Activated CD4-positive, alpha-beta T cell treated with anti-CD3 and anti-CD28 coated beads for 36 hours (primary cell): ENCODE measurements at regions of chr18 and their contacts with region 1.

Region 1: GRCh38 chr18:35240664-35241447 is at the start of gene ZNF397:
- DNase-seq: peak; percentile 98
- ATAC-seq: peak; percentile 98
- H3K4me3 Mint-ChIP-seq: peak within 1 kb of the TSS; percentile 97
- H3K27ac Mint-ChIP-seq: peak within 1 kb of the TSS; percentile 97
- H3K4me1 Mint-ChIP-seq: peaks cover 31% of the 10 kb centered on the region
- H3K27me3 Mint-ChIP-seq: no peaks in the 10 kb centered on the region
- total RNA-seq, gene ZNF397: 21.3 to 21.9 TPM

Region 2: DNA sequence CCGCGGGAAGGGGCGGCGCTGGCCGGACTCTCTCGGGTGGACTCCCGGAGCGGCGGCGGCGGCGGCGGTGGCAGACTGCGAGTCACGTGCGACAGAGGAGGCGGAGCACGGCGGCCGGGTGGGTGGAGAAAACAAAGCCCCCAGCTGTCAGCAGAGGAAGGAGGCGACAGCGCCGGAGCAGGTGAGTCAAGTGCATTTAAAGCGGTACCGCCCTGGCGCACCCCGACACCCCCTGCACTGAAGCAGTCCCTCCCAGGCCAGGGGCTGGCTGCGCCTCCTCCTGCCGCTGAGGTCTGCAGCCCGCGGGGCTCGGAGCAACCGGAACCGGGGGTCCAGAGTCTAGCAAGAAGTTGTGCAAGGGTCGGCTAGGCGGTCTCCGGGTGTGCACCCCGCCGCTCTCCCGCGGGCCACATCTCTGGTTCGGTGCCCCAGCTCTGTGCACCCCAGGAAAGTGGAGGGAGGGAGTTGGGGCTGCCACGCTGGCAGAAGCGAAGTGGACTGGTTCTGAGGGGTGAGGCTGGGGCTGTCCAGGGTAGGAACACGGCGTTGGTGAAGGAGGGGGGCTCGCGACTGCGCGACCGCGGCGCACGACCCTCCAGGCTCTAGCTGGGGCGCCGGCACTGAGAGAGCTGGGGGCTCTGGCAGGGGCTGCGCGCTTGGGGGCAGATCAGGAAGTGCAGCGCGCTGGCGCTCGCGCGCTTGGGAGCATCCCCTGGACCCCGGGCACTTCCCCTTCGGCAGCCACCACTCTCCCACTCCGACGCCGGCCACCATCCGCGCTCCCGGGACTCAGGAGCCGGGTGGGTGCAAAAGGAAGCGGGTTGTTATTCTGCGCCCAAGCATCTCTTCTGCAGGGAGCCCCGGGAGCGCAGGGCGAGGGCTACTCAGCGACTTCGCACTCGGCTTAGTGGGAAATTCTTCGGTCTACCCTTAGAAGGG is 263.7 kb before region 1 on chr18:
- CTCF ChIA-PET with region 1: no interaction called
- POLR2A ChIA-PET with region 1: no interaction called
- intact Hi-C with region 1: loop called in 1 of 2 experiments (anchors 1 kb)
- DNase-seq: peak; percentile 85
- ATAC-seq: peak; percentile 55
- H3K4me3 Mint-ChIP-seq: peak overlapping the region; percentile 73
- H3K27ac Mint-ChIP-seq: no peak overlapping the region
- H3K4me1 Mint-ChIP-seq: peaks cover 23% of the 10 kb centered on the region
- H3K27me3 Mint-ChIP-seq: peaks cover 32% of the 10 kb centered on the region

Region 3: DNA sequence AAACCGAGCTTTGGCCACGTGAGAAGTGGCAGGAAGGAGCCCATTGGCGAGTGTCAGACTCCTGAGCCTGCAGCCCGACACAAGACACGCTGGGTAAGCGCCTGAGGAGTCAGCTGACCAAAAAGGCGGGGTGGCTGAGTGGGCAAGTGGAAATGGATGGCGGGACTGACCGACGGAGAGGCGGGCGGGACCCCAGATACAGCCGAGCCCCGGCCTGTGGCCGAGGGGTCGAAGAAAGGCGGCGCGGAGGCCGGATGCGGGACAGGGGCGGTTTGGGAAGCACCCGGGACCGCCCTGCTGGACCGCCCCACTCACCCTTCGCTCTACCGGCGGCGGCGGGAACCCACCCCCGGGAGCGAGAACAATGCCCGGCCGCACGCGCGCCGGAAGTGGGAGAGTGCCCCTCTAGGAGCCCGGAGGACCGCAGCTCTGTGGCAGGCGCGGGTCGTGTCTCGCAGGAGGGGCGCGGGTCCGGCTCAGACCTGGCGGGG is 26.4 kb after region 1 on chr18:
- CTCF ChIA-PET with region 1: interaction called, 4 read pairs
- POLR2A ChIA-PET with region 1: interaction called, 5 read pairs
- intact Hi-C with region 1: loop called (anchors 1 to 2 kb)
- DNase-seq: peak; percentile 76
- ATAC-seq: peak; percentile 82
- H3K4me3 Mint-ChIP-seq: peak overlapping the region; percentile 80
- H3K27ac Mint-ChIP-seq: peak overlapping the region; percentile 91
- H3K4me1 Mint-ChIP-seq: peaks cover 21% of the 10 kb centered on the region
- H3K27me3 Mint-ChIP-seq: no peaks in the 10 kb centered on the region

Region 4: GRCh38 chr18:35343936-35344735 is 103.3 kb after region 1 on chr18 and contains the start of gene ZNF24:
- CTCF ChIA-PET with region 1: interaction called, 6 read pairs
- POLR2A ChIA-PET with region 1: interaction called, 4 read pairs
- intact Hi-C with region 1: loop called (anchors 1 to 2 kb)
- DNase-seq: peak; percentile 96
- ATAC-seq: peak; percentile 93
- H3K4me3 Mint-ChIP-seq: peak within 1 kb of the TSS; percentile 86
- H3K27ac Mint-ChIP-seq: peak within 1 kb of the TSS; percentile 94
- H3K4me1 Mint-ChIP-seq: peaks cover 38% of the 10 kb centered on the region
- H3K27me3 Mint-ChIP-seq: no peaks in the 10 kb centered on the region
- total RNA-seq, gene ZNF24: 31.7 to 50.9 TPM

Region 5: DNA sequence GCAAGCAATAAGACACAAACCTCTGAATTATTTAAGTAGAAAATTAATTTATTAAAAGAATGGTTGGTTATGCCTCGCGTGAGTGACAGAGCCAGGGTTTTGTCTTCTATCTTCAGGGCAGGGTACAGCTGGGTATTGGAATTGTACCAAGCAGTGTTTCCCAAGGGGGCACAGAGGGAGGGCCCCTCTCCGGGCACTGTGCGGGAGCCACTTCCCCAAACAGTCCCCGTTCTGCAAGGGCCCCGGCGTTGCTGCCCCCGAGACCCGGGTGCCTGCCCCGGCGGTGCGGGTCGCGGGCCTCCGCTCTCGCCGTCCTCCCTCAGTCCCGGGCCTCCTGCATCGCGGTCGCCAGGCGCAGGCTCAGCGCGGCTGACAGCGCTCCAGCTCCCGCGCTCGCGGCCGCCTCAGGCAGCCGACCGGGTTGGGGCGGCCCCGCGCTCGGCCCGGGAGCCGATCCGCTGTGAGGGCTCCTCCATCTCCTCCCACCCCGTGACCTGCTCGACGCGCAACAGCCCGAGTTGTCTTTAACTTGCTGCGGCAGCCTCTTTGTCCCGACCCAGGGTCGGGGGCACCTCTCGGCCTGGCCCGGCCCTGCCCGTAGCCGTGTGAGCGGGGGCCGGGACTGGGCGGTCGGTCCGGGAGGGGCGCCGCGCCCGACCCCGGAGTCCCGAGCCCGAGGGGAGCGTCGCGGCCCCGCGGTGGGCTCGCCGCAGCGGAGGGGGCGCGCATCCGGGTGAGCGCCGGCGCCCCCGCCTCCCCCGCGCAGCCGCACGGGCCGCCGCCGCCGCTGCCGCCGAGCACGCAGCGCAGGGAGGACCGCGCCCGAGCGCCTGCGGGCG is 340.1 kb after region 1 on chr18:
- CTCF ChIA-PET with region 1: no interaction called
- POLR2A ChIA-PET with region 1: no interaction called
- intact Hi-C with region 1: loop called in 1 of 2 experiments (anchors 2 kb)
- DNase-seq: peak; percentile 72
- ATAC-seq: peak; percentile 61
- H3K4me3 Mint-ChIP-seq: peak overlapping the region; percentile 69
- H3K27ac Mint-ChIP-seq: peak overlapping the region; percentile 37
- H3K4me1 Mint-ChIP-seq: peaks cover 35% of the 10 kb centered on the region
- H3K27me3 Mint-ChIP-seq: peaks cover 17% of the 10 kb centered on the region

Region 6: DNA sequence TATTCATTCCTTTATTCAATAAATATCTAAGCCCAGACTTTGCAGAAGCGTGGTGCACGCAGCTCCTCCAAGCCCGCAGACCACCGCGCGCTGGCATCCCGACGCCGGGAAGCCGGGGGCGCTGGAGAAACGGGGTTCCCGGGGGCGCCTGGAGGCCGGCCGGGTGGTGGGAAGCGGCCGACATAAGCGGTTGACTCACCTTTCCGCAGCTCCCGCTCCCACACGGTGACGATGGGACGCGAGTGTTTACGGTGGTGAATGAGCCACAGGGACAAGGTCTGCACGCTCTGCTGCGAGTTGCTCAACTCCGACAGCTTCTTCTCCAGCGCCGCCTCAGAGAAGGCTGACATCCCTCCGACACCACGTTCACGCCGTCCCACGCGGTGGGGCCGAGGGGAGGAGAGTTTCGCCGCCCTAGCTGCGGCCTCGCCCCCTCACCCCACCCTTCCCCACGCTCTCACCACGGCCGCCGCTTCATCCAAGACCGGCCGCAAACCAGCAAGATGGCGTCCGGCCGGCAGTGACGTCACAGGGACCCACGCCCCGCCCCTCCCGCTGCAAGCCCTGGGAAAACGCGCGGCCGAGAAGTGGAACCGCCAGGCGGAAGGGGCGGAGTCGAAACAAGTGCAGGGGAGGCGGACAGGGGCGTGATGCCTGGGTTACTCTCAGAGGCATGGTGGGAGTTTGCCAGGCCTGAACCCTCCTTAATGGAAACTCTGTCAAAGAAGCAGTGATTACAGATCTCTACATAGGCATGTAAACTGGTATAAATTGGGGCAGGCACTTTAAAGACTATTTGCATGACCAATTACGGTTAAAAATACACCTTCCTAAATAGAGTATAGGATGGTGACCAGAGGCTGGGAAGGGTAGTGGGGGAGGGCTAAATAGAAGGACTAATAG is 826.5 kb after region 1 on chr18 and contains the start of gene RPRD1A:
- CTCF ChIA-PET with region 1: no interaction called
- POLR2A ChIA-PET with region 1: no interaction called
- intact Hi-C with region 1: loop called in 1 of 2 experiments (anchors 1 kb)
- DNase-seq: peak; percentile 99
- ATAC-seq: peak; percentile 96
- H3K4me3 Mint-ChIP-seq: peak within 1 kb of the TSS; percentile 78
- H3K27ac Mint-ChIP-seq: peak within 1 kb of the TSS; percentile 89
- H3K4me1 Mint-ChIP-seq: peaks cover 29% of the 10 kb centered on the region
- H3K27me3 Mint-ChIP-seq: peaks cover 3% of the 10 kb centered on the region
- total RNA-seq, gene RPRD1A: 27.9 to 32.1 TPM